Posterior vena cava (tissue), 2 donors: ENCODE measurements at regions of chr19 and their contacts with region 1.

Region 1: DNA sequence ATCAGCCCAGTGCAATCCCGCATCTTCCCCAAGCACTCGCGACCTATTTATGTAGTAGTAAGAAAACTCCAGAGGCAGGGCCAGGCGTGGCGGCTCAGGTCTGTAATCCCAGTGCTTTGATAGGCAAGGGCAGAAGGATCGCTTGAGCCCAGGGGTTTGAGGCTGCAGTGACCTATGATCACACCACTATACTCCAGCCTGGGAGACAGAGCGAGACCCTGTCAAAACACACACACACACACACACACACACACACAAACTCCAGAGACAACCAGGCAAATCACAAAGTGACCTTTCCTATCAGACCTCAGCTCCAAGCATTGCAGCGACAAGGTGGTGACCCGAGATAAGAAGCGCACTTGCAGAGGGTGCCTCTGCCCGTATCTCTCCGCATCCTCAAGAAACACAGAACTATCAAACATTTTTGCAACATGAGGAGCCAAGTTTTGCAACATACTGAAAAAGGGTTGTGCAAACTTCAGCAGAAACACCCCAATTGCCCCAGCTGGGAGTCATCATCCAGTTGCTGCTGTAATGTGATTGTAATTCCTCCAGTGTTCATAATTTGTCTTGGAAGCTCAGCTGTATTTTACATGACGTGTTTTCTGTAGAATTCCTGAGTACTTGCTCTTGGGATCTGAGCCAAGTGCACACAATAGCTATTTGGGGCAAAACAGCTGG is 8.7 kb upstream of the KLF2 start:
- DNase-seq: peak; percentile 87

Region 2: DNA sequence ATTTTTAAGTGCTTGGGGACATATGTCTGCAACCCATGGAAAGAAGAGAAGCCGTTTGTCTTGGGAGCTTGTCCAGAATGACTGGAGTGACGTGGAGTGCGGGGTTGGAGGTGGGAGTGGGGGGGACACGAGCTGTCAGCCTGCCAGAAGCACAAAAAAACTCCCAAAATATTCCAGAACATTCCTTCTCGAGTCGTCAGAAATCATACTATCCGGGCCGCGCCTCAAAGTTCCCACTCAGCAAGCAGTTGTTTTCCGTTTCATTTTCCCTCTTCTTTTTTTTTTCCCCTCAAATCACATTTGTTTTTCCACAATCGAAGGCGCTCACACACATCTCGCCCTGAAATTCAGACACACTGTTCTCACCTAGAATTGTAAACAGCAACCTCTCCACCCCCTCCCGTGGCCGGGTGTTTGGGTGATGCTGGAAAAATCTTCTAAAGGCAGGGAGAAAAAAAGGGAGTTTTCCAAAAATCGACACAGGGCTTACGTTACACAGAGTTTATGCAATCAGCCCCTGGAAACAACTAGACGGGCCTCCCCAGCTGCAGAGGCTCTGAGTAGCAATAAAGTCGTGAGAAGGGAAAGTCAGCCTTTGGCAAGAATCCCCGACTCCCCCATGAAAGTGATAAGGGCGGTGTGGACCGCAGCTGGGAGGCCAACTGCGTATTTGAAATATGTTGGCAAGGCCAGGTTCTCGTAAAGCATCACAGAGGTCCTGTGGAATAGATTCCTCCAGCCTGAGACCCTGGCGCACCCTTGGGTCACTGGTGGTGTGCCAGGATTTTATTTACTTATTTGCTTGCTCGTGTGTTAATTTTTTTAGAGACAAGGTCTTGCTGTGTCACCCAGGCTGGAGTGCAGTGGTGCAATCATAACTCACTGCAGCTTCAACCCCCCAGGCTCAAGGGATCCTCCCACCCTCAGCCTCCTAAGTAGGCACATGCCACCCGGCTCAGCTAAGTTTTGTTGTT is 22.6 kb before region 1 on chr19:
- intact Hi-C with region 1: loop called in 1 of 2 experiments (anchors 2 kb)
- DNase-seq: peak; percentile 91